B cell (primary cell): ENCODE measurements at regions of chr2 and their contacts with region 1.

Region 1: GRCh38 chr2:69781321-69782248 is 39.7 kb downstream of the ANXA4 start:
- DNase-seq: no peak
- ATAC-seq: no peak
- H3K4me3 ChIP-seq: no peak overlapping the region
- H3K4me3 Mint-ChIP-seq: no peak overlapping the region
- H3K27ac ChIP-seq: peak overlapping the region in 1 of 2 donors; percentile 11
- H3K27ac Mint-ChIP-seq: no peak overlapping the region
- H3K4me1 ChIP-seq: peaks cover 28 to 37% of the 10 kb centered on the region in 2 donors
- H3K4me1 Mint-ChIP-seq: peaks cover 40% of the 10 kb centered on the region
- H3K27me3 ChIP-seq: no peaks in the 10 kb centered on the region
- H3K27me3 Mint-ChIP-seq: no peaks in the 10 kb centered on the region
- CTCF ChIP-seq: no peak

Region 2: GRCh38 chr2:69741619-69742466 is 39.7 kb before region 1 on chr2 and contains the start of gene ANXA4:
- CTCF ChIA-PET with region 1: interaction called, 3 read pairs
- POLR2A ChIA-PET with region 1: no interaction called
- intact Hi-C with region 1: loop called (anchors 5 kb)
- DNase-seq: peak; percentile 68
- ATAC-seq: peak; percentile 82
- H3K4me3 ChIP-seq: peak within 1 kb of the TSS; percentile 74 to 89 (median 75)
- H3K4me3 Mint-ChIP-seq: peak within 1 kb of the TSS; percentile 99
- H3K27ac ChIP-seq: peak within 1 kb of the TSS; percentile 14 to 79
- H3K27ac Mint-ChIP-seq: peak within 1 kb of the TSS; percentile 95
- H3K4me1 ChIP-seq: peaks cover 26 to 41% of the 10 kb centered on the region in 2 donors
- H3K4me1 Mint-ChIP-seq: peaks cover 30% of the 10 kb centered on the region
- H3K27me3 ChIP-seq: no peaks in the 10 kb centered on the region
- H3K27me3 Mint-ChIP-seq: no peaks in the 10 kb centered on the region
- CTCF ChIP-seq: no peak
- total RNA-seq, gene ANXA4: 28.1 and 28.4 TPM in 2 replicates

Region 3: DNA sequence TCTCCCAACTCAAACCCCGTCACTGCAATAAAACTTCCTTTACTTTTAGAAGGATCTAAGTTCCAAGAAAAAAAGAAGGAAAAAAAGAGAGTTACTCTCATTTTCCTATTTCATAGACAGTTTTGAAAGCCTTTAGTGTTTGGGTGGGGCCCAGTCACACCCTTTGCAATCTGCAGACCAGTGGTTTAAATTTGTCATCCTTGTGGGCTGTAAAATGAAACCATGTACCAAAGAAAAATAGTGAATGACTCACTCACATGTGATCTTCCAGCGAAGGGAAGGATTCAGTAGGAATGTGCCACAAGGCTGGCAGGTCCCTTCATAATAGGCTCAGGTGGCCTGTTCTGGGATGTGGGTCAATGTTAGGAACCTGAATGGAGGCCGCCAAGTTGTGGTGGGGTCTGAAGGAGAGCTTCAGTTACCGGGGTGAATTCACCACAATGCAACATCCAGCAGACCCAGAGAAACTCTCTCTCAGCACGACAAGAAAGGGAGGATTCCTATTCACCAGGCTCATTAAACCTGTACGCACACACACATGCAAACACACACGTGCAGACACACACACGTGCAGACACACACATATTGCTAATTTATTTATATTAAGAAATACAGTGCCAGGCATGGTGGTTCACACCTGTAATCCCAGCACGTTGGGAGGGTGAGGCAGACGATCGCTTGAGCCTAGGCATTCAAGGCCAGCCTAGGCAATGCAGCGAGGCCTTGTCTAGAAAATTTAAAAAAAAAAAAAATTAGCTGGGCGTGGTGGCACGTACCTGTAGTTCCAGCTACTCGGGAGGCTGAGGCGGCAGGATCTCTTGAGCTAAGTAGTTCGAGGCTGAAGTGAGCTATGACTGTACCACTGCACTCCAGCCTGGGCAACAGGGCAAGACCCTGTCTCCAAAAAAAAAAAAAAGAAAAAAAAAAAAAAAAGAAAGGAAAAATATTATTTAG is 11.1 kb before region 1 on chr2:
- CTCF ChIA-PET with region 1: interaction called, 3 read pairs
- POLR2A ChIA-PET with region 1: interaction called, 11 read pairs
- intact Hi-C with region 1: no loop called
- DNase-seq: no peak
- ATAC-seq: no peak
- H3K4me3 ChIP-seq: no peak overlapping the region
- H3K4me3 Mint-ChIP-seq: peak overlapping the region; percentile 8
- H3K27ac ChIP-seq: no peak overlapping the region
- H3K27ac Mint-ChIP-seq: peak overlapping the region; percentile 21
- H3K4me1 ChIP-seq: peaks cover 58 to 61% of the 10 kb centered on the region in 2 donors
- H3K4me1 Mint-ChIP-seq: peaks cover 58% of the 10 kb centered on the region
- H3K27me3 ChIP-seq: no peaks in the 10 kb centered on the region
- H3K27me3 Mint-ChIP-seq: no peaks in the 10 kb centered on the region
- CTCF ChIP-seq: no peak

Region 4: DNA sequence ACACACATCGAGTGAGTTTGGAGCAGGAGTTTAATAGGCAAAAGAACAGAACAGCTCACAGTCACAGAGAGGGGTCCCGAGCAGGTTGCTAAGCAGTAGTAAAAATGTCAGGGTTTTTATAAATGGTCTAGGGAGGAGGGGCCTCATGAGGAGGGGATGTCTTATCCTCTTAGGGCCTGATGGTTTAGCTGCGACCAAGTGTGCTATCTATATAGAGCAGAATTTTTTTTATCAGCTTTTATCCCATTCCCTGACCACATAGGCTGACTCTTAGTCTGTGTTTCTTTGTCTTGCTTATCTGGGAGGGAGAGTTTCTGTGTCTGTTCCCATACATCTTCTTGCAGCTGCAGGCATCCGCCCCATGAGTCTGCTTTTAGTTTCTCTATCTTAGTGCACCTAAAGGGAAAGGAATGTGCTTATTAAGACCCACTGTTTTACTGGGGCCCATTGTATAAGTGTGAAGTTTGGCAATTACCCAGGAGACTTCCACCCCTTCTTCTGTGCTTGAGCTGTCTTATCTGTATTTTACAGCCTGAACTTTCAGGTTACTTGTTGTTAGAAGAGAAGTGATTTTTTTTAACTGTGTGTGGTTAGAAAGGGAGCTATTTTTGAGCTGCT is 17.4 kb after region 1 on chr2:
- CTCF ChIA-PET with region 1: no interaction called
- POLR2A ChIA-PET with region 1: no interaction called
- intact Hi-C with region 1: no loop called
- DNase-seq: peak; percentile 35
- ATAC-seq: peak; percentile 46
- H3K4me3 ChIP-seq: peak overlapping the region in 4 of 5 experiments; percentile 11 to 42 (median 38)
- H3K4me3 Mint-ChIP-seq: peak overlapping the region; percentile 88
- H3K27ac ChIP-seq: peak overlapping the region; percentile 42 to 71
- H3K27ac Mint-ChIP-seq: peak overlapping the region; percentile 81
- H3K4me1 ChIP-seq: peaks cover 58 to 70% of the 10 kb centered on the region in 2 donors
- H3K4me1 Mint-ChIP-seq: peaks cover 60% of the 10 kb centered on the region
- H3K27me3 ChIP-seq: no peaks in the 10 kb centered on the region
- H3K27me3 Mint-ChIP-seq: no peaks in the 10 kb centered on the region
- CTCF ChIP-seq: no peak

Region 5: GRCh38 chr2:70123051-70123828 is 341.7 kb after region 1 on chr2:
- CTCF ChIA-PET with region 1: no interaction called
- POLR2A ChIA-PET with region 1: no interaction called
- intact Hi-C with region 1: no loop called
- DNase-seq: no peak
- ATAC-seq: no peak
- H3K4me3 ChIP-seq: peak overlapping the region in 2 of 5 experiments; percentile 71 to 99
- H3K4me3 Mint-ChIP-seq: peak overlapping the region; percentile 95
- H3K27ac ChIP-seq: peak overlapping the region; percentile 100
- H3K27ac Mint-ChIP-seq: peak overlapping the region; percentile 100
- H3K4me1 ChIP-seq: peaks cover 70 to 80% of the 10 kb centered on the region in 2 donors
- H3K4me1 Mint-ChIP-seq: peaks cover 72% of the 10 kb centered on the region
- H3K27me3 ChIP-seq: no peaks in the 10 kb centered on the region
- H3K27me3 Mint-ChIP-seq: no peaks in the 10 kb centered on the region
- CTCF ChIP-seq: no peak

Region 6: DNA sequence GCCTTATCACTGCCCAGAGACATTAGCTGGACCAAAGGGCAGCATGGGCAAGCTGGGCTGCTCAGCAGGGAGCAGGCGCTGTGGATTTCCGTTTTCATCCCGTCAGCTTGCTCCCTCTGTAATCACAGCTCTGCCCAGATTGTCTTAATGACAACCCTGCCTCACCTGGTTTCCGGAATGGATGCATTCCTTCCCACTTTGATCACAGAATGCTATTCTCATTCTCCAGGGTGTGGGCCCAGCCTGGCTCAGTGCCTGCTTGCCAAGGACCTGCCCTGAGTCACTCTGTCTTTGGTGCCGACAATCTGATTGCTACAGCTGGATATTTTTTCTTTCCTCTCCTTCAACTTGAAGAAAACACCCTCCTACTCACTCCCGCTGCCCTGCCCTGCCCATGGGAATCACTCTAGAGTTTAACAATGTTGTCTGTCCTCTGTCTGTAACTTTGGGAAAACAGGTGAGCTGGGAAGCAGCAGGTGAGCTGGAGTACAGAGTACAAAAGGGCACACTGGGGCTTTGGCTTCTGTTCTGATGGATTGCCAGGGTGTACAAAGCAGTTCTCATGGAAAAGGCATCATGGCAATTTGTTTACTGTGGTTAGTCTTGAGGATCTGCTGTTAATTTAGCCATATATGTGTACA is 547.5 kb after region 1 on chr2:
- CTCF ChIA-PET with region 1: no interaction called
- POLR2A ChIA-PET with region 1: no interaction called
- intact Hi-C with region 1: no loop called
- DNase-seq: no peak
- ATAC-seq: no peak
- H3K4me3 ChIP-seq: no peak overlapping the region
- H3K4me3 Mint-ChIP-seq: no peak overlapping the region
- H3K27ac ChIP-seq: no peak overlapping the region
- H3K27ac Mint-ChIP-seq: no peak overlapping the region
- H3K4me1 ChIP-seq: no peaks in the 10 kb centered on the region
- H3K4me1 Mint-ChIP-seq: no peaks in the 10 kb centered on the region
- H3K27me3 ChIP-seq: no peaks in the 10 kb centered on the region
- H3K27me3 Mint-ChIP-seq: peaks cover 11% of the 10 kb centered on the region
- CTCF ChIP-seq: no peak